Mammary epithelial cell (primary cell): ENCODE measurements at regions of chr10 and their contacts with region 1.

Region 1: GRCh38 chr10:93299606-93300287 is 182.4 kb downstream of the MYOF start:
- DNase-seq: no peak
- H3K4me3 ChIP-seq: no peak overlapping the region
- H3K27ac ChIP-seq: no peak overlapping the region
- H3K4me1 ChIP-seq: no peaks in the 10 kb centered on the region
- H3K27me3 ChIP-seq: no peaks in the 10 kb centered on the region
- CTCF ChIP-seq: no peak

Region 2: GRCh38 chr10:93224005-93224779 is 75.6 kb before region 1 on chr10:
- CTCF ChIA-PET with region 1: no interaction called
- dilution Hi-C with region 1: loop called (anchors 5 kb)
- in situ Hi-C with region 1: no loop called
- intact Hi-C with region 1: no loop called
- DNase-seq: no peak
- H3K4me3 ChIP-seq: no peak overlapping the region
- H3K27ac ChIP-seq: no peak overlapping the region
- H3K4me1 ChIP-seq: no peaks in the 10 kb centered on the region
- H3K27me3 ChIP-seq: no peaks in the 10 kb centered on the region
- CTCF ChIP-seq: peak; percentile 19 to 51